ENCODE measurements at regions of chr6 and their contacts with region 1.

Region 1: DNA sequence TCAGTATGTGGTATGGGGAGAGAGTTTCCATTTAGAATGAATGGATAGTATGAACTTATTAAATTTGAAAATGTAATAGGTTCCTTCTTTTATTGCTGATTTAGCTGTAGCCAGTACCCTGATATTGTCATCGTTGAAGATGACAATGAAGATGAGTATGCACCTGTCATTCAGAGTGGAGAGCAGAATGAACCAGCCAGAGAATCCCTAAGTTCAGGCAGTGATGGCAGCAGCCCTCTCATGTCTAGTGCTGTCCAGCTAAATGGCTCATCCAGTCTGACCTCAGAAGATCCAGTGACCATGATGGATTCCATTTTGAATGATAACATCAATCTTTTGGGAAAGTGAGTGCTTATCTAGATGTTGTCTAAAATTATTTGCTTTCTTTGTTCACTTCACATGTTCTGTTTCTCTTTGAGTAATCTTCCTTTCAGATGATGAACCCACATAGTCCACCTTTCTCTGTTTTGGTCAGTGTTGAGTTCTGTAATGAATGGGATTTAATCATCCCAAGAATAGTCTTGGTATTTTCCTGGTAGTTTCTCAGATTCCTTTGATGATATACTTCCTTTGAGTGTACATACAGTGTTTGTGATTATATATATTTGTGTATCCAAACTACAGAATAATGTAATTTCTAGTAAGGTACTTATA is 23.3 kb downstream of the HSF2 start:
- DNase-seq: no peak
- ATAC-seq: no peak
- H3K4me3 ChIP-seq: no peak overlapping the region
- H3K4me3 Mint-ChIP-seq: no peak overlapping the region
- H3K27ac ChIP-seq: no peak overlapping the region
- H3K27ac Mint-ChIP-seq: no peak overlapping the region
- H3K4me1 ChIP-seq: no peaks in the 10 kb centered on the region
- H3K4me1 Mint-ChIP-seq: no peaks in the 10 kb centered on the region
- H3K27me3 ChIP-seq: no peaks in the 10 kb centered on the region
- H3K27me3 Mint-ChIP-seq: no peaks in the 10 kb centered on the region
- CTCF ChIP-seq: no peak

Region 2: GRCh38 chr6:122459213-122459612 is 36.5 kb after region 1 on chr6:
- CTCF ChIA-PET with region 1: no interaction called
- POLR2A ChIA-PET with region 1: no interaction called
- intact Hi-C with region 1: loop called (anchors 5 kb)
- DNase-seq: no peak
- ATAC-seq: no peak
- H3K4me3 ChIP-seq: no peak overlapping the region
- H3K4me3 Mint-ChIP-seq: no peak overlapping the region
- H3K27ac ChIP-seq: no peak overlapping the region
- H3K27ac Mint-ChIP-seq: no peak overlapping the region
- H3K4me1 ChIP-seq: peaks cover 7 to 32% of the 10 kb centered on the region in 2 donors
- H3K4me1 Mint-ChIP-seq: peaks cover 52% of the 10 kb centered on the region
- H3K27me3 ChIP-seq: no peaks in the 10 kb centered on the region
- H3K27me3 Mint-ChIP-seq: no peaks in the 10 kb centered on the region
- CTCF ChIP-seq: no peak

Measured in B cell (primary cell).